ENCODE measurements at regions of chr11 and their contacts with region 1.

Region 1: DNA sequence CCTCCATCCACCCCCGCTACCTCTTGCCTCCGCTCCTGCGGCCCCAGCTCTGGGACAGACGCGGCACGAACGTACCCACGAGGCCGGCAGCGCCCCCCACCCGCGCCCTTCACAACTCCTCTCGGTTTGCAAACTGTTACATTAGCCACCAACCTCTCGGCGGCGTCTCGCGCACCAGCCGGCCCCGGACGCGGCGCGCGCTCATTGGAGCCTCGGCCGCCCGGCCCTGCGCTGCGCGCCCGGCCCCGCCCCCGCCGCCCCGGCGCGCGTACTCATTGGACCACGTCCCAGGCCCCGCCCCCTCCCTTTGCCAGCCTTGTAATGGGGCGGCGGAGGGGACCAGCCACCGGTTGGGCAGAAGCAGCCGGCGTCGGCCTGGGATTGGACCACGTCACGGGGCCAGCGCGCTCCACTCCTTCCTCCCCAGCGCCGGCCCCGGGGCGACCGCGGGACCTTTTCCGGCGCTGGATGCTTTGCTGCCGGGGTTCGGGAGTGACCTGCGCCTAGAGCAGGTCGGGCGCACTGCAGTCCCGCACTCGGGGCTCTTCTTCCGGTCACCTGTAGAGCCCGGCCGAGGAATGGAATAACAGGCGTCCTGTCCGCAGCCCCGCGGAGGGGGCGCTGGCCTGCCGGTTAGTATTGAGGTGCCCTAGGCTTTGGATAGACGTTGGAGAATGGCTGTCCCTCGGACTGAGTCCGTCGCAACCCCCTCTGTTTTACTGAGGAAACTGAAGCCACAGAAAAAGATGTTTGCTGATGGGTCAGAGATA is at the start of gene HYOU1:
- DNase-seq: peak; percentile 99
- H3K4me3 Mint-ChIP-seq: peak within 1 kb of the TSS; percentile 95
- H3K27ac Mint-ChIP-seq: peak within 1 kb of the TSS; percentile 98
- H3K4me1 Mint-ChIP-seq: peaks cover 36% of the 10 kb centered on the region
- H3K27me3 Mint-ChIP-seq: no peaks in the 10 kb centered on the region
- total RNA-seq, gene HYOU1: 193 and 203 TPM in 2 replicates

Region 2: DNA sequence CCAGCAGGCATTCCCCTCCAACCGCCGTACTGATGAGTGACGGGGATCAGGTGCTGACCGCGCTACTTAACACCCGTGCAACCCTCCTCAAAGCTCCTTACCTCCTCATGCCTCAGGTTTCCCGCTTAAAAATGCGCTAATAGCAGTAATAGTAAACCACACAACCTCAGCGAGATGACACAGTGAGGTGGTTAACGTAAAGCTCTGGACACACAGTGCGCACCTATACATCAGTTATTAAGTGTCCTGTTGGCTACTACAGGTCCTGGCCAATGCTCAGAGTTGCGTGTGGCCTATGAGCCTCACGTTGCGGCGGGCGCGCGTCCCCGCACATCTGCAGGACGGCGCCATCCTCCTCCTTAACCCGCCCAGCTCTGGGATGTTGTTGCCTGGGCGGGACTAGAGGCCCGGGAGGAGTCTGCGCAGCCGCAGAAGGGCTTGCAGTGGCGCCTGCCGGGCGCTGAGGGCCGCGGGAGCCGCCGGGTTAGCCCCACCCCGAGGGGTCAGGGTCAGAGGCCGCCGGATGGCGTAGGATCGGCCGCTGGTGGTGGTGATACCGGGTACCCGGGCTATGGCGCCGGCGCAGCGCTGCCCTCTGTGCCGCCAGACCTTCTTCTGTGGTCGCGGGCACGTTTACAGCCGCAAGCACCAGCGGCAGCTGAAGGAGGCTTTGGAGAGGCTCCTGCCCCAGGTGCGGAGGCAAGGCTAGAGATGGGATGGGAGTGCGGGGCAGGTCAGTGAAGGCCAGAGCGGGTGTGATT is 59.4 kb before region 1 on chr11 and contains the start of gene CENATAC:
- intact Hi-C with region 1: loop called (anchors 5 kb)
- DNase-seq: peak; percentile 99
- H3K4me3 Mint-ChIP-seq: peak within 1 kb of the TSS; percentile 90
- H3K27ac Mint-ChIP-seq: peak within 1 kb of the TSS; percentile 94
- H3K4me1 Mint-ChIP-seq: peaks cover 24% of the 10 kb centered on the region
- H3K27me3 Mint-ChIP-seq: no peaks in the 10 kb centered on the region
- total RNA-seq, gene CENATAC: 46.3 and 47.1 TPM in 2 replicates

Region 3: DNA sequence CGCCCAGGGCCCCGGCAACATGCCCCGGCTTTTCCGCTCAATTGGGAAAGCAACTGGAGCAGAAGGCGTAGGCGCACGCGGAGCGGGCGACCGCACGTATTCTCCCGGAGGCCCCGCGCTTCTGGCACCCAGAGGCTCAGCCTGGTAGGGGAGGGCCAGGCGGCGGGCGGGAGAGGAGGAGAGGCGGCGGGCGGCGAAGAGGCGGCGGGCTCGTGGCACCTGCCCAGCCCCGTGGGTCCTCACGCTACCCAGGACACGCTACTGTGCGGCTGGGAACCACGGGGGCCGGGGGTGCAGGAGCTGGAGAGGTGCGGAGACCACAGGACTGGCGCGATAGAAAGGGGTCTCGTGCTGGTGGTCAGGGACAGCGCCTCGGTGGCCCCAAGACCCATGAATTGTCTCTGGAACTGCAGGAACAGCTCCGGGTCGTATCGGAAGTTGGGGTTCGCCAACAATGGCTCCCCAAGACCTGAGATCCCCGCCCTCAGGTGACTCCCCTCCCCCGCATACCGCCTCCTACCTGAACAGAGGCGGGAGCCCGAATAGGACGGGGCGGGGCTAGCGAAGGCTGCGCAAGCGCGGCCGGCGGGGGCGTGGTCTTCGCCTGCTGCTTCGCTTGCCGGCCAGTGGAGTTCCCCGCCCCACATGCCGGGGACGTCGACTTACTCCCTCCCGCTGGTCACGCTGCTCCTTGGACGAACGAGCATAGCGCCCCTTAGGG is 26.7 kb before region 1 on chr11 and contains the start of gene SLC37A4:
- intact Hi-C with region 1: loop called (anchors 1 kb)
- DNase-seq: peak; percentile 100
- H3K4me3 Mint-ChIP-seq: peak within 1 kb of the TSS; percentile 83
- H3K27ac Mint-ChIP-seq: peak within 1 kb of the TSS; percentile 89
- H3K4me1 Mint-ChIP-seq: peaks cover 19% of the 10 kb centered on the region
- H3K27me3 Mint-ChIP-seq: no peaks in the 10 kb centered on the region
- total RNA-seq, gene SLC37A4: 28.8 and 31.6 TPM in 2 replicates

Region 4: GRCh38 chr11:119044708-119045107 is 12.5 kb before region 1 on chr11:
- intact Hi-C with region 1: no loop called
- DNase-seq: no peak
- H3K4me3 Mint-ChIP-seq: no peak overlapping the region
- H3K27ac Mint-ChIP-seq: no peak overlapping the region
- H3K4me1 Mint-ChIP-seq: peaks cover 7% of the 10 kb centered on the region
- H3K27me3 Mint-ChIP-seq: no peaks in the 10 kb centered on the region

Region 5: GRCh38 chr11:119084663-119085436 is 27.7 kb after region 1 on chr11 and contains the start of gene HMBS:
- intact Hi-C with region 1: loop called (anchors 1 kb)
- DNase-seq: peak; percentile 98
- H3K4me3 Mint-ChIP-seq: peak within 1 kb of the TSS; percentile 97
- H3K27ac Mint-ChIP-seq: peak within 1 kb of the TSS; percentile 95
- H3K4me1 Mint-ChIP-seq: peaks cover 24% of the 10 kb centered on the region
- H3K27me3 Mint-ChIP-seq: no peaks in the 10 kb centered on the region
- total RNA-seq, gene HMBS: 60.9 and 62.8 TPM in 2 replicates

Region 6: DNA sequence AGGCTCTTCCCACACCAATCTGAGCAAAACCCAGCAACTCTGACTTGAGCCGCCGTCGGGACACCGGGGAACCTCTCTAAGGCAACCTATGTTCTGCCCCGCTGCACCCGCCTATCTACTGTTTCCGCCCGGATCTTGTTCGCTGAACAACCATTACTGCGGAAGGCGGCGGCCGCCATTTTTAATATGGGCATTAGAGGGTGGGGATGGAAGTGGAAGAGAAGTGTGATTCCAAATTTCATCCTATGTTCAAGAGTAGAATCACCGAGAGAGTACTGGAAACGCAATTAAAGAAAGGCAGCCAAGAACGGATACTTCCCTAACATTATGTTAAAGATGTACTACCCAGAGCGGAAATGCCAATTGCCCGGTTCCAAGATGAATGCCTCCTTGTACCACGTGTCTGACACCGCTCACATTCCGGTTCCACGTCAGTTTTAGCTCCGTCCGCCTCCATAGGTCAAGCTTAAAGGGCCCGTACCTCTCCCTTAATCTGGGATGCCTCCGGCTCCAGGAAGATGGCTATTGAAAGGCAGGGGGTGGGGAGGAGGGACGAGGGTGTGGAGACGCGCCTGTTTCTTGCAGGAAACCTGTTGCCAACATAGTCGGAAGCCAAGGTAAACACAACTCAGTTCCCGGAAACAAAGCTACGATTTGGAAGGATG is 44.7 kb after region 1 on chr11 and contains the start of gene DPAGT1:
- intact Hi-C with region 1: loop called (anchors 1 kb)
- DNase-seq: peak; percentile 96
- H3K4me3 Mint-ChIP-seq: peak within 1 kb of the TSS; percentile 92
- H3K27ac Mint-ChIP-seq: peak within 1 kb of the TSS; percentile 99
- H3K4me1 Mint-ChIP-seq: peaks cover 40% of the 10 kb centered on the region
- H3K27me3 Mint-ChIP-seq: no peaks in the 10 kb centered on the region
- total RNA-seq, gene DPAGT1: 76.1 and 79.4 TPM in 2 replicates